A549 (cell line): ENCODE measurements at regions of chr1 and their contacts with region 1.

Region 1: GRCh38 chr1:229661022-229661877 is 35.2 kb downstream of the URB2 start:
- DNase-seq: peak; percentile 70 to 86
- ATAC-seq: peak; percentile 84 to 96
- H3K4me3 ChIP-seq: no peak overlapping the region
- H3K27ac ChIP-seq: peak overlapping the region; percentile 59 to 67; a peak in 5 of 6 replicates
- H3K4me1 ChIP-seq: peaks cover 4% of the 10 kb centered on the region; the same call in 1 of the 3 replicates
- CTCF ChIP-seq: peak; percentile 71
- EP300 ChIP-seq: no peak
- POLR2A ChIP-seq: no peak
- RAD21 ChIP-seq: peak; percentile 82 to 87

Region 2: DNA sequence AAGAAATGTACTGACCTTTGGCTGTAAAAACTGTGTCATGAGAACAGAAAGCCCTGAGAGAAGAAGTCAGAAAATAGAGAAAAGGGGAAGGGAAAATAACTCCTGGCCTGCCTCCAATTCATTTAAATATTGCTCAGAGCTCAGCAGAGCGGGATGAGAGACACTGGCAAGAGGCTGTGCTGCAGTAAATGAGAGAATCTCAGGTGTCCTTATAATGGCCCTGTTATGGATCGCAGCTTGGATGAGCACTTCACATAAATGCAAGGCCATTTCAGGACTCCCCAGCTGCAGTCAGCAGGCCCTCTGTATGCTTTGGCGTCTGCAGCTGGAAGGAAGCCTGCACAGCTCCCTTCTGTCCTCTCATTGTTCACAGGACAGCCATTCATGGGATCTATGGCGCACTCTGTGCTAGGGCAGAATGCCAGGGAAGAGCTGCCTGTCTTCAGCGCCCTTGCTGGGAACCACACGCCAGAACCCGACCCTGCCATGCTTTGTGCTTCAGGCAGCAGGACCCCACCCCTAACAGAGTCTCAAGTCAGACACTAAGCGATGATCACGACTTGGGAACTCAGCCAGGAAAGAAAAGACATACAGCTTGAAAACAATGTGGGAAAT is 82.1 kb before region 1 on chr1:
- CTCF ChIA-PET with region 1: no interaction called
- POLR2A ChIA-PET with region 1: no interaction called
- DNase-seq: no peak
- ATAC-seq: peak in 1 of 2 experiments; percentile 51; a peak in 3 of 6 replicates
- H3K4me3 ChIP-seq: no peak overlapping the region
- H3K27ac ChIP-seq: no peak overlapping the region
- H3K4me1 ChIP-seq: no peaks in the 10 kb centered on the region
- CTCF ChIP-seq: no peak
- EP300 ChIP-seq: no peak
- POLR2A ChIP-seq: no peak
- RAD21 ChIP-seq: no peak

Region 3: GRCh38 chr1:229650045-229650444 is 11.2 kb before region 1 on chr1:
- CTCF ChIA-PET with region 1: interaction called, 26 read pairs
- POLR2A ChIA-PET with region 1: no interaction called
- DNase-seq: no peak
- ATAC-seq: no peak
- H3K4me3 ChIP-seq: no peak overlapping the region
- H3K27ac ChIP-seq: no peak overlapping the region
- H3K4me1 ChIP-seq: no peaks in the 10 kb centered on the region
- CTCF ChIP-seq: no peak
- EP300 ChIP-seq: no peak
- POLR2A ChIP-seq: no peak
- RAD21 ChIP-seq: no peak

Region 4: DNA sequence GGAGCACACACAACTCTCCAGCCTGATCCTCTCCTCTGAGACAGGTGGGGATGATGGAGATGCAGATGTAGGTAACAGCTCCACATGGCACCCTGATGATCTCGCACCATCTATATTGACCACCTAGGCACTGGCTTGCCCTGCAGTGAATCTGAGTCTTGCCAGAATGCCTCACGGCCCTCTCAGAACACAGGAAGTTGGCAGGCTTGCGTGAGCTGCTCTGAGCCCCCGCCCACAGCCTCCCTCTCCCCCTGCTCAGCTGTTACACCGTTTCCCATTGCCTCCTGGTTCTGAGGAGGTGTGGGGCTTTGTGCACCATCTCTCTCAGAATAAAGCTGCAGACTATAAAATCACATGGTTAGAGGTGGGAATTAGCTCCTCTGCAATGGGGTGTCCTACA is 12.8 kb after region 1 on chr1:
- CTCF ChIA-PET with region 1: interaction called, 30 read pairs
- POLR2A ChIA-PET with region 1: no interaction called
- DNase-seq: no peak
- ATAC-seq: no peak
- H3K4me3 ChIP-seq: no peak overlapping the region
- H3K27ac ChIP-seq: no peak overlapping the region
- H3K4me1 ChIP-seq: no peaks in the 10 kb centered on the region
- CTCF ChIP-seq: no peak
- EP300 ChIP-seq: no peak
- POLR2A ChIP-seq: no peak
- RAD21 ChIP-seq: no peak

Region 5: DNA sequence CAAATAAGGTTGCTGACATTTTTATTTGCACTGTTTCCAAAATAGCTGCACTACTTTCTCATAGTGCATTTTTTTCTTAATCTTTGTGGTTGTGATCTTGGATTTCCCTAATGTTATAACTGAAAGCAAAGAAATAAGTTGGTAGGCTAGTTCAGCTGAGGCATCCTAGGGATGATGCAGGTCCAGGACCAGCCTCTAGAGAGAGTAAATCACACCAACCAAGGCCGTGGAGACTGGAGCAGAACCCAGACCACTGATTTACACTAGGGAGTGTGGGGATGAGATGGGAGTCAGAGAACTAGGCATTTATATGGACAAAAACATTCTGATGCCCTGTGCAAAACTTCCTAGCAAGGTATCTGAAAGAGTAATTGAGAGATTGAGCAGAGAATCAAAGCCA is 69.3 kb after region 1 on chr1:
- CTCF ChIA-PET with region 1: no interaction called
- POLR2A ChIA-PET with region 1: no interaction called
- DNase-seq: no peak
- ATAC-seq: peak; percentile 50 to 51; a peak in 2 of 6 replicates
- H3K4me3 ChIP-seq: no peak overlapping the region
- H3K27ac ChIP-seq: no peak overlapping the region
- H3K4me1 ChIP-seq: no peaks in the 10 kb centered on the region
- CTCF ChIP-seq: no peak
- EP300 ChIP-seq: no peak
- POLR2A ChIP-seq: no peak
- RAD21 ChIP-seq: no peak

Region 6: GRCh38 chr1:230073371-230074035 is 412.3 kb after region 1 on chr1:
- CTCF ChIA-PET with region 1: no interaction called
- POLR2A ChIA-PET with region 1: no interaction called
- DNase-seq: peak in 1 of 2 experiments; percentile 27
- ATAC-seq: peak in 1 of 2 experiments; percentile 37; a peak in 3 of 6 replicates
- H3K4me3 ChIP-seq: no peak overlapping the region
- H3K27ac ChIP-seq: peak overlapping the region; percentile 10 to 76; a peak in 3 of 6 replicates
- H3K4me1 ChIP-seq: peaks cover 82% of the 10 kb centered on the region
- CTCF ChIP-seq: no peak
- EP300 ChIP-seq: no peak
- POLR2A ChIP-seq: no peak
- RAD21 ChIP-seq: no peak

Region 7: DNA sequence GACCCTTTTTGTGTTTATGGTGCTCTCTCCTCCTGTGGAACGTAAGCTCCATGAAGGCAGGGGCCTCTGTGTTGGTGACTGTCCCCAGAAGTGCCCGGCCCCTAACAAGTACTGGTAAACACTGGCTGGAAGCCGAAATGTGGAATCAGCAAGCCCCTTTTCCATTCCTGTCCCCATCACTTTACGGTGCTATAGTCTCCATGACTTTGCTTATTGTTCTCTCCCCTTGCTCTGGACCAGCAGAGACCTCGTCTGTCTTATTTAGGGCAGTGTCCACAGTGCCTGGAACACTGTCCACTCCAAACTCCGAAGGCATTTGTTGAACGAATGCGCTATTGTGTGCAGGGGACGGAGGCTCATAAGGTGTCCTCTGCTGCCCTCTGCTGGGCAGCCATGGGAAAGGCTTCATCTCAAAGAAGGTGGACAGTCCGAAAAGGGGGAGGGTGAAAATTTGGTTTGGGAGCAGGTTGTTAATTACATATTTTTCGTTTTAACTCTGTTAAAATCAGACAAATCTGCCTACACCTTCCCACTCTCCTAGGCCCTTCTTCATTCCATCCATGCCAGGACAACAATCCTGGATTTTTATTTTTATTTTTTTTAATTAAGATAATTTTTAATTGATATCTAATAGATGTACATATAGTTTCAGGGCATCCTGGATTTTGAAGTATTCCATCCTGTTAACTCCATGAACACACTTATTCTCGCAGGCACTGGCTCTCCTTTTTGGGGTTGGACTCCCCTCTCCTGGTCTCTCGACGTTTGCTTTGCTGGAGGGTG is 649.3 kb after region 1 on chr1:
- CTCF ChIA-PET with region 1: interaction called, 16 read pairs
- POLR2A ChIA-PET with region 1: no interaction called
- DNase-seq: peak; percentile 71 to 93
- ATAC-seq: peak; percentile 77 to 89
- H3K4me3 ChIP-seq: no peak overlapping the region
- H3K27ac ChIP-seq: 0 out of 6 replicates have a peak overlapping the region, but pooled peaks of 1 of the 2 experiments have one; percentile 37
- H3K4me1 ChIP-seq: peaks cover 16% of the 10 kb centered on the region
- CTCF ChIP-seq: peak; percentile 94
- EP300 ChIP-seq: no peak
- POLR2A ChIP-seq: no peak
- RAD21 ChIP-seq: peak; percentile 97 to 99